ENCODE measurements at regions of chr14 and their contacts with region 1.

Region 1: GRCh38 chr14:68663385-68664076 is 129.3 kb downstream of the ZFP36L1 start:
- DNase-seq: no peak
- ATAC-seq: peak; percentile 79
- H3K4me3 Mint-ChIP-seq: peak overlapping the region; percentile 76
- H3K27ac Mint-ChIP-seq: peak overlapping the region; percentile 74
- H3K4me1 Mint-ChIP-seq: peaks cover 52% of the 10 kb centered on the region
- H3K27me3 Mint-ChIP-seq: no peaks in the 10 kb centered on the region
- CTCF ChIP-seq: no peak

Region 2: GRCh38 chr14:68564826-68565760 is 98.4 kb before region 1 on chr14:
- CTCF ChIA-PET with region 1: no interaction called
- POLR2A ChIA-PET with region 1: no interaction called
- intact Hi-C with region 1: no loop called
- DNase-seq: no peak
- ATAC-seq: no peak
- H3K4me3 Mint-ChIP-seq: no peak overlapping the region
- H3K27ac Mint-ChIP-seq: no peak overlapping the region
- H3K4me1 Mint-ChIP-seq: peaks cover 28% of the 10 kb centered on the region
- H3K27me3 Mint-ChIP-seq: no peaks in the 10 kb centered on the region
- CTCF ChIP-seq: no peak

Region 3: DNA sequence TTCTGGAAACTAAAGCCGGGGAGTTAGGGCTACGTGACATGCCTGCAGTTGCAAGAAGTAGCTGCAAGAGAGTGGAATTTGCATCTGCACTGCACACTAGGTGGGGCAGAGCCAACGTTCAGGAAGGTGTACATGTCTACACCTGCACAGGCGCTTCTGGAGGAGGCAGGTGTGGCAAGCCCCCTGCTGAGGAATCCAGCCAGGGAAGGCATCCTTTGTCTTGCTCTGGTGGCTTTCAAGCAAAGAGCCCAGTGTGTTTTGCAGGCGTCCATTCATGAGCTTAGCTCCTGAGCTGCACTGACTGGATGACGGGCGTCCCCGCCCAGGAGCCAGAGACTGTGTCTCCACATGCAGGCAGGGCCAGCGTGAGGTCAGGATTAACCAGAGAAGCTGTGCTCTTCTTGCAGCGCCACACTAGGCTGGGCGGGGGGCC is 13.0 kb after region 1 on chr14:
- CTCF ChIA-PET with region 1: interaction called, 4 read pairs
- POLR2A ChIA-PET with region 1: interaction called, 12 read pairs
- intact Hi-C with region 1: no loop called
- DNase-seq: no peak
- ATAC-seq: no peak
- H3K4me3 Mint-ChIP-seq: no peak overlapping the region
- H3K27ac Mint-ChIP-seq: peak overlapping the region; percentile 61
- H3K4me1 Mint-ChIP-seq: peaks cover 63% of the 10 kb centered on the region
- H3K27me3 Mint-ChIP-seq: no peaks in the 10 kb centered on the region
- CTCF ChIP-seq: no peak

Region 4: DNA sequence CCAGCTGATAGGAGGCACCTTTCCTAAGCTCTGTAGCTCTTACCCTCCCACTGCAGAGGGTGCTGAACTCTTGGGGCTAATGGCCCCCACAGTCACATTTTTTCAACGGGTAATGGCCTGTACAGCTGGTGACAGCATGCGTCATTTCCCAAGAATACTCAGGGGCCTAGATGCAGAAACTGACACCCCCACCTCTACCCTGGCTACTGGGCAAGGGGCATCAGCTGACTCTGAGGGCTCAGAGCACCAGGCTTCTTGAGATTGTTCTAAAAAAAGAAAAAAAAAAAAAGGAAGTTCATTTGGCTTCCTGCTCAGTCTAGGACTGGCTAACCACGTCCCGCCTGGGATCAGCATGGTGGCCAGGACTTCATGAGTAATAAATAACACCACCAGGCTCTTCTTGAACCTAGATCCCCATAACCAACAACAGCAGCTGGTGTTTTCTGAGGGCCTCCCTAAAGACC is 94.1 kb after region 1 on chr14:
- CTCF ChIA-PET with region 1: no interaction called
- POLR2A ChIA-PET with region 1: no interaction called
- intact Hi-C with region 1: no loop called
- DNase-seq: no peak
- ATAC-seq: peak; percentile 88
- H3K4me3 Mint-ChIP-seq: no peak overlapping the region
- H3K27ac Mint-ChIP-seq: peak overlapping the region; percentile 18
- H3K4me1 Mint-ChIP-seq: peaks cover 33% of the 10 kb centered on the region
- H3K27me3 Mint-ChIP-seq: no peaks in the 10 kb centered on the region
- CTCF ChIP-seq: no peak

Region 5: GRCh38 chr14:68807148-68807600 is 143.6 kb after region 1 on chr14:
- CTCF ChIA-PET with region 1: no interaction called
- POLR2A ChIA-PET with region 1: no interaction called
- intact Hi-C with region 1: no loop called
- DNase-seq: no peak
- ATAC-seq: no peak
- H3K4me3 Mint-ChIP-seq: peak overlapping the region; percentile 71
- H3K27ac Mint-ChIP-seq: peak overlapping the region; percentile 98
- H3K4me1 Mint-ChIP-seq: peaks cover 80% of the 10 kb centered on the region
- H3K27me3 Mint-ChIP-seq: no peaks in the 10 kb centered on the region
- CTCF ChIP-seq: no peak